ENCODE measurements at regions of chr7 and their contacts with region 1.

Region 1: GRCh38 chr7:353746-354325 is 63.9 kb downstream of the FOXL3 start:
- DNase-seq: no peak
- H3K4me3 ChIP-seq: no peak overlapping the region
- H3K4me3 Mint-ChIP-seq: peak overlapping the region in 1 of 8 donors; percentile 16
- H3K27ac ChIP-seq: no peak overlapping the region
- H3K27ac Mint-ChIP-seq: peak overlapping the region in 2 of 7 donors; percentile 20 to 47
- H3K4me1 ChIP-seq: peaks cover 24% of the 10 kb centered on the region
- H3K4me1 Mint-ChIP-seq: peaks cover 5 to 15% (median 11%) of the 10 kb centered on the region in 4 donors
- H3K27me3 ChIP-seq: no peaks in the 10 kb centered on the region
- H3K27me3 Mint-ChIP-seq: no peaks in the 10 kb centered on the region

Region 2: DNA sequence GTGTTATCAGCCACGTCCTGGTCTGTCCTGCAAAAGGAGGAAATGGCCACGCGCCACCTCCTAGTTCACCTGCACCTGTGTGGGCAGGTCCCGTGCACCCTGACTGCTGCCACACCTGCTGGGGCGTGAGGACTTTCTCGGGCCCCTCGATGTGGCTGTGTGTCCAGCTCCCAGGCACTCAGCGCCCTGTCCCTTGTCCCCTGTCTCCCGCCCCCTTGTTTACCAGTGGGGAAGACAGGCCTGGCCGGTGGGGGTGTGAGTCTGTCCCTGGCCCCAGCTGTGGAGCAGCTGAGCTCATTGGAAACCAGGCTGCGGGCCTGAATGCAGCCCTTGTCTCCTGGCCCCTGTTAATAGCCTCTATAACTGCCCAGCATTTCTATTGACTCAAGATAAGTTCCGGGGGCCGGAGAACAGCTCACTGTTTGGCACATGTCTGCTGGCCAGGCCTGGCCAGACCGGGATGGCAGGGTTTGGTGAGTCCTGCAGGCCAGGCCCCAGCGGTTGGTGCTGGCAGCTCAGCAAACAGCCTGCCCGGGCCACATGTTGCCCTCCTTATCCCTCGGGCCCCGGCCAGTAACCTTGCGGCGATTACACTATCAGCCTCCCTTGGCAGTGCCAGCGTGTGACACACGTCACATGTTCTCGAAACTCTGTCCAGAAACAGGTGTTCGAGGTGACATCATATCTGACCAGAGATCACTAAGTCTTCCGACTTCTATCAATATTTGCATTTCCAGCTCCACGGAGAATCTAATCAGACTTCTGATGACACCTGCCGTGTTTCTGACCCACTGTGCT is 11.8 kb before region 1 on chr7:
- CTCF ChIA-PET with region 1: no interaction called
- POLR2A ChIA-PET with region 1: interaction called, 10 read pairs
- intact Hi-C with region 1: no loop called
- DNase-seq: no peak
- H3K4me3 ChIP-seq: no peak overlapping the region
- H3K4me3 Mint-ChIP-seq: no peak overlapping the region
- H3K27ac ChIP-seq: no peak overlapping the region
- H3K27ac Mint-ChIP-seq: peak overlapping the region in 1 of 7 donors; percentile 37
- H3K4me1 ChIP-seq: no peaks in the 10 kb centered on the region
- H3K4me1 Mint-ChIP-seq: peaks cover 0 to 10% (median 2%) of the 10 kb centered on the region in 4 donors
- H3K27me3 ChIP-seq: no peaks in the 10 kb centered on the region
- H3K27me3 Mint-ChIP-seq: no peaks in the 10 kb centered on the region

Region 3: DNA sequence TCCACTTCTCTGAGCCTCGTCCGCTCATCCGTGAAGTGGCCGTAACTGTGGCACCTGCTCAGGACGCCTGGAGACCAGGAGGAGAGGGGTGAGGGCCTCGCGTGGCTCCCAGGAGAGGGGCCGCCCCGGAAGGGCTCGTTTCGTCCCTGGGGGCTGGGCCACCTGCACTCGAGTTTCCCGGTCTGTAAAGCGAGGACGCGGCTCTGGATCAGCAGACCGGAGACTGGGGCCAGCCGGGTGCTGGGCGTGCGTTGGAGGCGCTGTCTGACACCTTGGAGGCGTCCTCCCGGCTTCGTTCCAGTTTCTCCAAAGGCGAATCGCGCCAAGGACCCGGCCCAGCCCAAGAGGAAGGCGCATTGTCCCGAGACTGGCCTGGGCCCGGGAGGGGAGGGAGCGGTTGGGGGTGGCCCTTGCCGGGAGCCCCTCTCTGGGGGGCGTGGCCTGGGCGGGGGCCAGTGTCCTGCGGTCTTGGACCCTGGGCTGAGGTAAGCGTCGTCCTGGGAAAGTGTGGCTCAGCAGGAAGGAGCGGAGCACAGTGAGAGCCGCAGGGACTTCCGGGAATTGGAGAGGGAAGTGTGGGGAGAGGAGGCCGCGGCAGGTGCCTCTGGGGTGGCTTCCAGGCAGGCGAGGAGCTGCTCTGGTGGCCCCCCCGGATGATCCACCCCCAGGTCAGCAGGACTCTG is 25.8 kb after region 1 on chr7:
- CTCF ChIA-PET with region 1: no interaction called
- POLR2A ChIA-PET with region 1: interaction called, 13 read pairs
- intact Hi-C with region 1: no loop called
- DNase-seq: peak in 1 of 5 donors; percentile 45
- H3K4me3 ChIP-seq: no peak overlapping the region
- H3K4me3 Mint-ChIP-seq: peak overlapping the region in 5 of 8 donors; percentile 43 to 81 (median 74)
- H3K27ac ChIP-seq: no peak overlapping the region
- H3K27ac Mint-ChIP-seq: peak overlapping the region in 3 of 7 donors; percentile 70 to 91 (median 87)
- H3K4me1 ChIP-seq: peaks cover 24% of the 10 kb centered on the region
- H3K4me1 Mint-ChIP-seq: peaks cover 18 to 43% (median 25%) of the 10 kb centered on the region in 4 donors
- H3K27me3 ChIP-seq: no peaks in the 10 kb centered on the region
- H3K27me3 Mint-ChIP-seq: peaks cover 0 to 1% of the 10 kb centered on the region in 2 donors

Region 4: GRCh38 chr7:584122-584465 is 230.3 kb after region 1 on chr7:
- CTCF ChIA-PET with region 1: no interaction called
- POLR2A ChIA-PET with region 1: interaction called, 14 read pairs
- intact Hi-C with region 1: no loop called
- DNase-seq: peak; percentile 85 to 98 (median 91)
- H3K4me3 ChIP-seq: peak overlapping the region; percentile 30 to 87
- H3K4me3 Mint-ChIP-seq: peak overlapping the region; percentile 87 to 98 (median 92)
- H3K27ac ChIP-seq: peak overlapping the region; percentile 77
- H3K27ac Mint-ChIP-seq: peak overlapping the region; percentile 87 to 98 (median 96)
- H3K4me1 ChIP-seq: peaks cover 25% of the 10 kb centered on the region
- H3K4me1 Mint-ChIP-seq: peaks cover 24 to 44% (median 36%) of the 10 kb centered on the region in 4 donors
- H3K27me3 ChIP-seq: no peaks in the 10 kb centered on the region
- H3K27me3 Mint-ChIP-seq: no peaks in the 10 kb centered on the region

Region 5: GRCh38 chr7:620052-620451 is 266.2 kb after region 1 on chr7:
- CTCF ChIA-PET with region 1: no interaction called
- POLR2A ChIA-PET with region 1: interaction called, 23 read pairs
- intact Hi-C with region 1: loop called (anchors 5 kb)
- DNase-seq: no peak
- H3K4me3 ChIP-seq: no peak overlapping the region
- H3K4me3 Mint-ChIP-seq: peak overlapping the region in 3 of 8 donors; percentile 10 to 63 (median 46)
- H3K27ac ChIP-seq: no peak overlapping the region
- H3K27ac Mint-ChIP-seq: peak overlapping the region; percentile 85 to 100 (median 98)
- H3K4me1 ChIP-seq: peaks cover 49% of the 10 kb centered on the region
- H3K4me1 Mint-ChIP-seq: peaks cover 29 to 50% (median 37%) of the 10 kb centered on the region in 4 donors
- H3K27me3 ChIP-seq: no peaks in the 10 kb centered on the region
- H3K27me3 Mint-ChIP-seq: no peaks in the 10 kb centered on the region